Endothelial cell of umbilical vein (primary cell): ENCODE measurements at regions of chr4 and their contacts with region 1.

Region 1: DNA sequence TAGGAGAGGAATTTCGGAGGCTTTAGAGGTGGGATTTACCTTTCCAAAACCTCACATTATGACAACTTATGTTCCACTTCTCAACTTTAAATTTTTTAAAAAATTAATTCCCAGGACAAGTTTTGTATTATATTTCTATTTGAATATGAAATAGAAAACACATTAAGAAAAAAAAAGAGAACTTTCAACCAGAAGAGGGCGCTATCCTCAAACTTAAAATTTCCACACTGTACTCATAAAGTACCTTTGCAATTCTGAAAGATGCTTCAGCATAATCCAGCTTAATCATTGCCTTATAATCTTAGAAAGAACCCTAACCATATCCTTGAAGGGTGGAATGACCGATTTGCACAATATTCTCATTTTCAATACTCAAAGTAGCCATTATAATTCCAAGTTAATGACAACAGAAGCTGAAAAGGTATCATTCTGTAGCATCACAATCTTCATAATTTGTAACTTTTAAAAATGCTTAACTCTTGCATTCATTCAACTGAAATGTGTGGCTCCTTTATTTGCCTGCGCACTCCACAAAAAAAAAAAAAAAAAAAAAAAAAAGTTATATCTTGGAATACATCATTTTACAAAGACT is 158.0 kb downstream of the KCNIP4 start:
- DNase-seq: peak; percentile 51
- H3K4me3 ChIP-seq: no peak overlapping the region
- H3K27ac ChIP-seq: no peak overlapping the region
- H3K4me1 ChIP-seq: no peaks in the 10 kb centered on the region
- H3K27me3 ChIP-seq: peaks cover 0 to 2% of the 10 kb centered on the region in 2 experiments
- CTCF ChIP-seq: peak; percentile 14 to 26
- POLR2A ChIP-seq: no peak

Region 2: GRCh38 chr4:21512353-21512752 is 278.2 kb before region 1 on chr4:
- CTCF ChIA-PET with region 1: interaction called, 20 read pairs
- POLR2A ChIA-PET with region 1: no interaction called
- dilution Hi-C with region 1: no loop called
- intact Hi-C with region 1: no loop called
- DNase-seq: peak; percentile 71
- H3K4me3 ChIP-seq: no peak overlapping the region
- H3K27ac ChIP-seq: no peak overlapping the region
- H3K4me1 ChIP-seq: no peaks in the 10 kb centered on the region
- H3K27me3 ChIP-seq: peaks cover 34 to 55% of the 10 kb centered on the region in 2 experiments
- CTCF ChIP-seq: peak; percentile 15 to 17
- POLR2A ChIP-seq: no peak

Region 3: DNA sequence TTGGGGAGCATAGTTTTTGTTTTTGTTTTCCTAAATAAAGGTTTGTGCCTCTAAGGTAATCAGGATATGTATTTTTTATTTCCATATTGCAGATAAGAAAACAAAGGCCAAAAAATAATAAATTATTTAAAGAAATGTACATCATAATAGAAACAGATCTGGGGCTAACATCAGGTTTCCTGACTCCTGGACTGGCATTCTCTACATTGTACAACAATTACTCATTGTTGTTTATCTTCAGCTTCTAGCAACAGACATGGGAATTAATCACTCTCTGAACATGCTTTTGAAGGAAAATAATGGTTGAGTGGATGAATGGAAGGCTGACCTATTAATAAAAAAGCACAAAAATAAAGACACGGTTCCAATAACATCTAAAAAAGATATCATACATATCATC is 11.9 kb after region 1 on chr4:
- CTCF ChIA-PET with region 1: interaction called, 44 read pairs
- POLR2A ChIA-PET with region 1: no interaction called
- dilution Hi-C with region 1: no loop called
- intact Hi-C with region 1: no loop called
- DNase-seq: peak; percentile 89
- H3K4me3 ChIP-seq: peak overlapping the region in 1 of 3 experiments; percentile 32
- H3K27ac ChIP-seq: peak overlapping the region; percentile 92
- H3K4me1 ChIP-seq: peaks cover 17% of the 10 kb centered on the region
- H3K27me3 ChIP-seq: no peaks in the 10 kb centered on the region
- CTCF ChIP-seq: no peak
- POLR2A ChIP-seq: no peak

Region 4: GRCh38 chr4:21879187-21879586 is 88.7 kb after region 1 on chr4:
- CTCF ChIA-PET with region 1: interaction called, 20 read pairs
- POLR2A ChIA-PET with region 1: no interaction called
- dilution Hi-C with region 1: no loop called
- intact Hi-C with region 1: loop called (anchors 2 kb)
- DNase-seq: peak; percentile 22
- H3K4me3 ChIP-seq: no peak overlapping the region
- H3K27ac ChIP-seq: no peak overlapping the region
- H3K4me1 ChIP-seq: no peaks in the 10 kb centered on the region
- H3K27me3 ChIP-seq: no peaks in the 10 kb centered on the region
- CTCF ChIP-seq: peak in 1 of 2 donors; percentile 13
- POLR2A ChIP-seq: no peak

Region 5: DNA sequence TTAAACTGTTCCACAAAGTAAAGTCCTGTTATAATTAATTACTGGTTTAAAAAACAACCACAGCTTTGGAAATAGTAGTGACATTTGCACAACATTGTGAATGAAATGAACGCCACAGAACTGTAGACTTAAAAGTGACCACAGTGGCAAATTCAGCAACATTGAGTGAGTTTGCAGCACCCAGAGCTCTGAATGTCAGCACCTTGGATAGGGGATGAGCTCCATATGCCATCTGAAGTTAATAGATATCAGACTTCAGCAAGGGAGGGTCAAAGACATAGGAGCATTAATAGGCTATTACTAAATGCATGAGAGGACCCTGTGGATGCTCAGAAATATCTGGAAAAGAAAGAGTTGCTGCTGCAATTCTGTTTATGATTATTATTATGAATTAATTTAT is 213.3 kb after region 1 on chr4:
- CTCF ChIA-PET with region 1: no interaction called
- POLR2A ChIA-PET with region 1: no interaction called
- dilution Hi-C with region 1: no loop called
- intact Hi-C with region 1: no loop called
- DNase-seq: no peak
- H3K4me3 ChIP-seq: no peak overlapping the region
- H3K27ac ChIP-seq: no peak overlapping the region
- H3K4me1 ChIP-seq: no peaks in the 10 kb centered on the region
- H3K27me3 ChIP-seq: no peaks in the 10 kb centered on the region
- CTCF ChIP-seq: no peak
- POLR2A ChIP-seq: no peak

Region 6: GRCh38 chr4:22369901-22370562 is 579.5 kb after region 1 on chr4:
- CTCF ChIA-PET with region 1: interaction called, 19 read pairs
- POLR2A ChIA-PET with region 1: no interaction called
- dilution Hi-C with region 1: no loop called
- intact Hi-C with region 1: no loop called
- DNase-seq: no peak
- H3K4me3 ChIP-seq: no peak overlapping the region
- H3K27ac ChIP-seq: no peak overlapping the region
- H3K4me1 ChIP-seq: no peaks in the 10 kb centered on the region
- H3K27me3 ChIP-seq: no peaks in the 10 kb centered on the region
- CTCF ChIP-seq: no peak
- POLR2A ChIP-seq: no peak

Region 7: GRCh38 chr4:22410645-22411247 is 620.2 kb after region 1 on chr4:
- CTCF ChIA-PET with region 1: interaction called, 36 read pairs
- POLR2A ChIA-PET with region 1: no interaction called
- dilution Hi-C with region 1: no loop called
- intact Hi-C with region 1: no loop called
- DNase-seq: peak; percentile 36
- H3K4me3 ChIP-seq: no peak overlapping the region
- H3K27ac ChIP-seq: no peak overlapping the region
- H3K4me1 ChIP-seq: no peaks in the 10 kb centered on the region
- H3K27me3 ChIP-seq: no peaks in the 10 kb centered on the region
- CTCF ChIP-seq: peak; percentile 12 to 27
- POLR2A ChIP-seq: no peak

Region 8: GRCh38 chr4:22680065-22680642 is 889.6 kb after region 1 on chr4:
- CTCF ChIA-PET with region 1: interaction called, 10 read pairs
- POLR2A ChIA-PET with region 1: no interaction called
- dilution Hi-C with region 1: no loop called
- intact Hi-C with region 1: no loop called
- DNase-seq: no peak
- H3K4me3 ChIP-seq: no peak overlapping the region
- H3K27ac ChIP-seq: no peak overlapping the region
- H3K4me1 ChIP-seq: no peaks in the 10 kb centered on the region
- H3K27me3 ChIP-seq: no peaks in the 10 kb centered on the region
- CTCF ChIP-seq: no peak
- POLR2A ChIP-seq: no peak